ENCODE measurements at regions of chr13 and their contacts with region 1.

Region 1: GRCh38 chr13:114281351-114282040 is at the start of gene UPF3A:
- DNase-seq: peak; percentile 95
- ATAC-seq: peak; percentile 80
- H3K4me3 Mint-ChIP-seq: peak within 1 kb of the TSS; percentile 91
- H3K27ac Mint-ChIP-seq: peak within 1 kb of the TSS; percentile 97
- H3K4me1 Mint-ChIP-seq: peaks cover 33% of the 10 kb centered on the region
- H3K27me3 Mint-ChIP-seq: no peaks in the 10 kb centered on the region
- CTCF ChIP-seq: no peak
- total RNA-seq, gene UPF3A: 68.3 and 83.2 TPM in 2 replicates

Region 2: GRCh38 chr13:114161644-114162532 is 119.6 kb before region 1 on chr13:
- CTCF ChIA-PET with region 1: no interaction called
- POLR2A ChIA-PET with region 1: no interaction called
- intact Hi-C with region 1: no loop called
- DNase-seq: no peak
- ATAC-seq: peak; percentile 72
- H3K4me3 Mint-ChIP-seq: peak overlapping the region; percentile 80
- H3K27ac Mint-ChIP-seq: peak overlapping the region; percentile 41
- H3K4me1 Mint-ChIP-seq: peaks cover 51% of the 10 kb centered on the region
- H3K27me3 Mint-ChIP-seq: peaks cover 13% of the 10 kb centered on the region
- CTCF ChIP-seq: no peak

Region 3: GRCh38 chr13:114263578-114263977 is 17.9 kb before region 1 on chr13:
- CTCF ChIA-PET with region 1: no interaction called
- POLR2A ChIA-PET with region 1: interaction called, 12 read pairs
- intact Hi-C with region 1: loop called (anchors 2 kb)
- DNase-seq: no peak
- ATAC-seq: peak; percentile 28
- H3K4me3 Mint-ChIP-seq: no peak overlapping the region
- H3K27ac Mint-ChIP-seq: peak overlapping the region; percentile 67
- H3K4me1 Mint-ChIP-seq: peaks cover 52% of the 10 kb centered on the region
- H3K27me3 Mint-ChIP-seq: no peaks in the 10 kb centered on the region
- CTCF ChIP-seq: no peak

Region 4: GRCh38 chr13:114314074-114314912 is 32.8 kb after region 1 on chr13 and contains the start of gene CHAMP1:
- CTCF ChIA-PET with region 1: interaction called, 4 read pairs
- POLR2A ChIA-PET with region 1: interaction called, 22 read pairs
- intact Hi-C with region 1: loop called (anchors 1 kb)
- DNase-seq: peak; percentile 91
- ATAC-seq: peak; percentile 83
- H3K4me3 Mint-ChIP-seq: peak within 1 kb of the TSS; percentile 89
- H3K27ac Mint-ChIP-seq: peak within 1 kb of the TSS; percentile 94
- H3K4me1 Mint-ChIP-seq: peaks cover 53% of the 10 kb centered on the region
- H3K27me3 Mint-ChIP-seq: no peaks in the 10 kb centered on the region
- CTCF ChIP-seq: no peak
- total RNA-seq, gene CHAMP1: 30.4 and 34.8 TPM in 2 replicates

Region 5: GRCh38 chr13:114339857-114340534 is 58.5 kb after region 1 on chr13:
- CTCF ChIA-PET with region 1: interaction called, 3 read pairs
- POLR2A ChIA-PET with region 1: interaction called, 17 read pairs
- intact Hi-C with region 1: no loop called
- DNase-seq: no peak
- ATAC-seq: no peak
- H3K4me3 Mint-ChIP-seq: no peak overlapping the region
- H3K27ac Mint-ChIP-seq: no peak overlapping the region
- H3K4me1 Mint-ChIP-seq: peaks cover 9% of the 10 kb centered on the region
- H3K27me3 Mint-ChIP-seq: peaks cover 5% of the 10 kb centered on the region
- CTCF ChIP-seq: no peak

Measured in activated B cell treated with CpG ODN at 0.5 μM for 24 hours (primary cell).